Left cardiac atrium (tissue), 4 donors: ENCODE measurements at regions of chr21 and their contacts with region 1.

Region 1: DNA sequence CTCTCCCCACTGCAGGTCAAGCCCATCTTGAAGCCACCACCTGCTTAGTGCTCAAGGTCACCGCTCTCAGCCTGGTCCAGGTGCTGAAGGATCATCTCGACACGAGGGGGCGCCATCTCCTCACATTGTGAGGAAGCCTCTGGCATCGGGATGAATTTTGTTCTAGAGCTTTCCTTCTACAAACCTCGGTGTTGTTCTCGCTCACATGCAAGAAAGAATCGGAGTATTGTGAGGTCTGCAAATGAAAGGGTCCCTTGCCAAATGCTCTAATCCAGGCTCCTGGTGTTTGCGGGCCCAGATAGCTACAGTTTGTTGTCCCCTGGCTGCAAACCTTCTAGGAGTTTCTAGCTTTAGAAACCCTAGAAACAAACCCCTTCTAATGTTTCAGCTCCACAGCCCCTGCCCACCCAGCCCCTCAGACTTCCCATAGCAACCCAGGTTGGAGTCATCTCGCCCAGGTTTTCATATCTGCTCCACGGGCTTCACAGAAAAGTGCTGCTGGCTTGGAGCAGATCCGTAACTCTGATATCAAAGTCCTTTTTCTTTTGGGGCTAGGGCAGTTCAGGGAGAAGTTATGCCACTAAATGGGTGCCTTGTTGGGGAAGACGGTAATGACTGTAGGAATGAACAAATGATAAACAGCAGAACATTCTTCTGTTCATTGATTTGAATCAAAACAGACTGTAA is 8.6 kb upstream of the ATP5PO start:
- DNase-seq: peak; percentile 92
- ATAC-seq: peak; percentile 97

Region 2: DNA sequence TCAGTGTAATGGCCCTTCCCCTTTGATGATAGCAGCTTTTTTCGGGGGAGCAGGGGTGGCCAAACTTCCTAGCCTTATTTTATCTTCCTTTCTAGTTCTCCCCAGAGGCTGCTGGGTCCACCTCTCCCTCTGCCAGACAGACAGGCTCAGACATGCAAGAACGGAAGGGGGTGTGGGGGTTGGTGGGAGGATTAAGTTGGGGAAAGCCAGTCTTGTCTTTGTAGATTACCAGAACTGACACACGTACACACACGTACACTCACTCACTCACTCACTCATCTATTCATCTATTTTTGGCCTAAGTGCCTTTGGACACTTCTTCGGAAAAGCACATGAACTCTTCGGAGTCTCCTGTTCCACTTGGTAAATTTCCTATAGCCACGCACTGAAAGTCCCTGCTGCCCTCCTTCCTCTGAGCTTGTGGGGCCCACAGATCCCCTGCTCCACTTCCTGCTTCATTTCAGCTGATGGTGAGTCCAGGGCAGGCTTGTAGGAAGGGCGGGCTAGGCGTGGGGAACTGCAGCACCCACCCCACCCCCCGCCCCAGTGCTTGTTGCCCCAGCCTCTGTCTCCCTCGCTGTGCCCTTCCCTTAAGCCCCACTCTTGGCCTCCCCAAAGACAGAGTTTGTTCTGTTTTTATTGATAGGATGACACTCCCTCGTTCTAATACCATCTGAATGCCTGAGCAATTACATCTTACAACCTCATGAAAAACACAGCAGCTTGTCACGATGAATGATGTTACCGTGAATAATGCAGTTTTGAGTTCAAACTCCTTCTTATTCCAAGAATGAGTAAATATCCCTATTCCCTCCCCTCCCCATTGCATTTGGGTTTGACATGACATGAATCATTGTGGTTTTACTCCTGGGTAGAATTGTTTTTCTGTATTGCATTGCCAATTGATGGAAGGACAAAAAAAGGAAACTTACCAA is 52.1 kb after region 1 on chr21:
- intact Hi-C with region 1: no loop called
- DNase-seq: peak; percentile 66
- ATAC-seq: peak; percentile 72 to 79

Region 3: DNA sequence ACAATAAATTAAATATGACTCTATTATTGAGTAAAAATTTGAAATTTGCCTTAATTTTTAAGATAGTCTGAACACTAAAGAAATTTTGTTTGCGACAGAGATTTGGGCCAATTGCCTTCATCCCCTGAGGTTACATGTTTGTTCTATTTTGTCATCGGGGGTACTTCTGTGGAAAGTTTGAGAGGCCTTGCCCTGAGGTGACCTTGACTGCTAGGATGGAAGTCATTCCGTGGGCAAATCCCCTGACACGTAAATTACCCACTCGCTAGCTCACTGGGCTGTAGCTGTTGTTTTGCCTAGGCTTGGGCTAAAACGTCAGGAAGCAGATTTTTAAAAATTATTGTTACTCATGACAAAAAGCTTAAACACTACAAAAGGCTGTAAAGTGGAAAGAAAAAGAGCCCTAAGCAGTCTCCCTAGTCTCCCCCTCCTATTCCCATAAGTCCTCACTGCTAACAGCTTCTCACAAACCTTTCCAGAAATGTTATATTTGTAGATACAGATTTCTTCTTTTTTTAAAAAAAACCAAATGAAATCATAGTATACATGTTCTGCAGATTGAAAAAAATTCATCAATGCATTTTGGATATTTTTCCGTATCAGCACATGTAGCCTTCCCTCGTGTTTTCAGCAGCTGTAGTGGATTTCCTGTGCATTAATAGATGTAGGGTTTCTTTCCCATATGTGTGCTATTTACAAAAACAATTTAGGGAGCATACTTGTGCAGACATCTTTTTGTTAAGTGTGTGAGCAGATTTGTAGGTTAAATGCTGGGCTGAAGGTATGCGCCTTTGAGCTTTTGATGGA is 291.9 kb after region 1 on chr21:
- intact Hi-C with region 1: loop called in 1 of 2 experiments (anchors 10 kb)
- DNase-seq: no peak
- ATAC-seq: peak; percentile 47 to 84

Region 4: GRCh38 chr21:34345091-34345871 is 421.1 kb after region 1 on chr21:
- intact Hi-C with region 1: loop called (anchors 2 to 5 kb)
- DNase-seq: no peak
- ATAC-seq: peak; percentile 35 to 58

Region 5: DNA sequence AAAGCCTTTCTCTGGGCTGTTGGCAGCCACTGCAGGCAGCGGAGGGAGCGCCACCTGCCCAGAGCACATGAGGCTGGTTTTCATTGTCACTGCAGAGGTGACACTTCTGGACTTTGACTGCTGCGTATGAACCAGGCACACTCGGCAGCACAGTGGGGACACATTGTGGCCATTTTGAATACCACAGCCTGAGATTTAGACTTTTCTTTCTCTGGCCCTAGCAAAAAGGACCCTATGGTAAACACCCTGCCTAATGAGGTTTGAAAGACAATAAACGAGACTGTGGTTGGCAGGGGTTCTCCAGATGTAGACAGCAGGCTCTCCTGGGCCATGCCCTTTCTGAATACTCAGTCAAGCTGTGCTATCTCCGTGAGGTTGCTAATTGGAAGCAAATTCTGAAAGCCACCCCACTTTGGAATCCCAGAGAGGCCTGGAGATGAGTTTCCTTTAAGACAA is 427.6 kb after region 1 on chr21:
- intact Hi-C with region 1: loop called (anchors 2 to 5 kb)
- DNase-seq: peak; percentile 35
- ATAC-seq: peak; percentile 82 to 90

Region 6: DNA sequence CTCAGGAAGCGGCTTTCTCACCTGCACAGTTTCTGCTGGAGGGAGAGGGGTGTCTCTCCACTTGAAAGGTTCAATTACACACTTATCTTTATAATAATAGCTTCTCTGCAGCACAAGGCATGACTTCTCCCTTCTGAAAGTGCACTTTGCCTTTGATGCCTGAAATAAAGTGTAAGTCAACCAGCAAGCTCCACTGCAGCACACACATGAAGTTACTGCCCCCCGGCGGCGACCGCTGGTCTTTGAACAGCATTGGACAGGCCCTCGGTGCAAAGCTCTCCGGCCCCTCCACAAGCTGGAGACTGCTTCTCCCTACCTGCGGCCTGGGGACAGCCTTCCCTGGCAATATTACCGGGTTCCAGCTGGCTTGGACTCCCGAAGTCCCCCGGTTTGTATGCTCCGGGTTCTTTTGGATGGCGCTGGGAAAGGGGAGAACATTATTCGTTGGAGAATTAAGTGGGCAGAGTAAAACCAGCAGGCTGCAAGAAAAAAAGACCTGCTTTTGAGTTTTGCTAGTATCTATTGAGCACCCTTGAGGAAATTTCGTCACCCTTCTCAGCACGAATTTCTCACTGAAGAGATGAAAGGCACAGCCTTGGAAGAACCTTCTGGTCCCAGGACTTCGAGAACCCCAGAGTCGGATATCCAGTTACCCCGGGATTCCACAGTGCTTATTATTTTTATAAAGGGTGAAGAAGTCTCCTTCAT is 678.9 kb after region 1 on chr21:
- intact Hi-C with region 1: no loop called
- DNase-seq: peak; percentile 85
- ATAC-seq: peak; percentile 96 to 98